PC-3 (cell line): ENCODE measurements at regions of chr1 and their contacts with region 1.

Region 1: DNA sequence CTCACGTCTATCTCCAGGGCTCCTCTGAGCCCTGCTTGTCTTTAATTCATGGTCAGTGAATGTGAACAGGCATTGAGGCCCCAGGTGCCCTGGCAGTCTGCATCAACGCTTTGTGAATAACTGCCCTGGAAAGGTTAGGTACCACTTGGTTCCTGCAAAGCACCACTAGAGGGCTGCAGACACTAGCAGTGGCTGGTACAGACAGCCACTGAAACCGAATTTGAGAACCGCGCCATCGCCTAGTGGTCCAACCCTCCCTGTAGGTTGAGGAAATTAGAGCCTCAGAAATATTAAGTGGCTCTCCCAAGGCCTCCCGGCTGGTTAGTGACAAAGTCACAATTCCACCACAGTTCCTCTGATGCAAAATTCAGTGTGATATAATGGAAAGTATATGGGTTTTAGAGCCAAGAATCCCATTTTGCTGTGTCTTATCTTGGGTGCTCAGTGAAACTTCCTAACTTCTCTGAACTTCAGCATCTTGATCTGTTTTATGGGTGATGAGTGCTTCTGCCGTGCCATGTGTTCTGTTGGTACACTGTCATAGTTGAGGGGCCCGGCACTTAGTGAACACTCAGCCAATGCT is 46.2 kb upstream of the BCL9 start:
- DNase-seq: peak; percentile 91
- ATAC-seq: peak; percentile 98
- H3K4me3 ChIP-seq: no peak overlapping the region
- H3K27ac ChIP-seq: no peak overlapping the region
- H3K4me1 ChIP-seq: no peaks in the 10 kb centered on the region
- H3K27me3 ChIP-seq: no peaks in the 10 kb centered on the region
- CTCF ChIP-seq: peak; percentile 99

Region 2: GRCh38 chr1:147389532-147390524 is 105.3 kb before region 1 on chr1:
- CTCF ChIA-PET with region 1: no interaction called
- POLR2A ChIA-PET with region 1: no interaction called
- intact Hi-C with region 1: loop called (anchors 1 kb)
- DNase-seq: peak; percentile 82
- ATAC-seq: peak; percentile 94
- H3K4me3 ChIP-seq: no peak overlapping the region
- H3K27ac ChIP-seq: no peak overlapping the region
- H3K4me1 ChIP-seq: no peaks in the 10 kb centered on the region
- H3K27me3 ChIP-seq: no peaks in the 10 kb centered on the region
- CTCF ChIP-seq: peak; percentile 89

Region 3: GRCh38 chr1:147599362-147600118 is 104.5 kb after region 1 on chr1:
- CTCF ChIA-PET with region 1: no interaction called
- POLR2A ChIA-PET with region 1: no interaction called
- intact Hi-C with region 1: loop called (anchors 1 kb)
- DNase-seq: peak; percentile 94
- ATAC-seq: peak; percentile 82
- H3K4me3 ChIP-seq: peak overlapping the region; percentile 75
- H3K27ac ChIP-seq: peak overlapping the region; percentile 32; the same call in 1 of the 2 replicates
- H3K4me1 ChIP-seq: peaks cover 18% of the 10 kb centered on the region
- H3K27me3 ChIP-seq: no peaks in the 10 kb centered on the region
- CTCF ChIP-seq: no peak

Region 4: GRCh38 chr1:147627435-147628110 is 132.5 kb after region 1 on chr1:
- CTCF ChIA-PET with region 1: interaction called, 3 read pairs
- POLR2A ChIA-PET with region 1: no interaction called
- intact Hi-C with region 1: loop called (anchors 1 kb)
- DNase-seq: peak; percentile 72
- ATAC-seq: peak; percentile 70
- H3K4me3 ChIP-seq: no peak overlapping the region
- H3K27ac ChIP-seq: no peak overlapping the region
- H3K4me1 ChIP-seq: no peaks in the 10 kb centered on the region
- H3K27me3 ChIP-seq: no peaks in the 10 kb centered on the region
- CTCF ChIP-seq: peak; percentile 97